GM12878 (cell line): ENCODE measurements at regions of chr6 and their contacts with region 1.

Region 1: GRCh38 chr6:129748212-129748900 is 38.4 kb upstream of the ARHGAP18 start:
- DNase-seq: peak; percentile 82
- ATAC-seq: peak; percentile 85
- H3K4me3 ChIP-seq: peak overlapping the region; percentile 56
- H3K27ac ChIP-seq: peak overlapping the region; percentile 96
- H3K4me1 ChIP-seq: peaks cover 42% of the 10 kb centered on the region
- H3K27me3 ChIP-seq: no peaks in the 10 kb centered on the region
- CTCF ChIP-seq: no peak
- EP300 ChIP-seq: 0 out of 4 replicates have a peak, but pooled peaks of 1 of the 2 experiments have one; percentile 29
- POLR2A ChIP-seq: peak; percentile 51
- RAD21 ChIP-seq: no peak

Region 2: DNA sequence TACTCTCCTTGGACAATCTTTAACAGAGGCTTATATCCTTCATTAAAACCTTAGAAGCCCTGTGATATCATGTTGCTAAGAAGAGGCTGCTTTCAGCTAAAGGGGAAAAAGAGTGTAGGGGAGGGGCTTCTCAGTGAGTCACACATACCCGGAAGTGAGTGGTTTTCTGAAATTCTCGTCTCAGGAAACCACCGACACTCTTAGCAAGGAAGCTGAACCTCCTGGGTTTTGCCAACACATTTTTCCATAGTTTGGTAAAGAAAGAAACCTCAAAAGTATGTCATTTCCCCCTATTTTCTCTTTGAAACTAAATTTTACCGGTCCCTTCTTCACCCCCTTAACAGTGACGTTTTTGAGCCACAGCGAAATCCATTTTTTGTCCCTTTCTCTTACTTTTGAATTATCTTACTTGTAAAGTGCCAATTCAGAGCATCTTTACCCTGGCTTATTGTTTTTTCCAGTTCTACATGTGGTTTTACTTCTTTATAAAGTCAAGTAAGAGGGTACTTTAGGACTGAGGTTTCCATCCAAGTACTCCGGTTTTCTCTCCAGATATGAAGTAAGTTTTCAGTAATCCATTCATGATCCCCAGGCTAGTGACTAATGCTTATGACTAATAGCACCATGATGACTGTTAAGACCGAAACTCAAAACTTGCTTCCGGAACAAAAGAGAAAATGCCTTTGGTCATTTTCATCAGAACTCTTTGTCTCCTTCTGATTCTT is 257.7 kb before region 1 on chr6:
- CTCF ChIA-PET with region 1: interaction called, 5 read pairs
- POLR2A ChIA-PET with region 1: interaction called, 4 read pairs
- RAD21 ChIA-PET with region 1: interaction called, 4 read pairs
- SMC1A ChIA-PET with region 1: interaction called, 4 read pairs
- in situ Hi-C with region 1: loop called (anchors 5 kb)
- intact Hi-C with region 1: no loop called
- DNase-seq: peak; percentile 68
- ATAC-seq: peak; percentile 89
- H3K4me3 ChIP-seq: 0 out of 2 replicates have a peak overlapping the region, but pooled peaks have one; percentile 1
- H3K27ac ChIP-seq: peak overlapping the region; percentile 88
- H3K4me1 ChIP-seq: peaks cover 23% of the 10 kb centered on the region
- H3K27me3 ChIP-seq: no peaks in the 10 kb centered on the region
- CTCF ChIP-seq: no peak
- EP300 ChIP-seq: peak in 1 of 2 experiments; percentile 72; a peak in 1 of 4 replicates
- POLR2A ChIP-seq: no peak
- RAD21 ChIP-seq: no peak

Region 3: DNA sequence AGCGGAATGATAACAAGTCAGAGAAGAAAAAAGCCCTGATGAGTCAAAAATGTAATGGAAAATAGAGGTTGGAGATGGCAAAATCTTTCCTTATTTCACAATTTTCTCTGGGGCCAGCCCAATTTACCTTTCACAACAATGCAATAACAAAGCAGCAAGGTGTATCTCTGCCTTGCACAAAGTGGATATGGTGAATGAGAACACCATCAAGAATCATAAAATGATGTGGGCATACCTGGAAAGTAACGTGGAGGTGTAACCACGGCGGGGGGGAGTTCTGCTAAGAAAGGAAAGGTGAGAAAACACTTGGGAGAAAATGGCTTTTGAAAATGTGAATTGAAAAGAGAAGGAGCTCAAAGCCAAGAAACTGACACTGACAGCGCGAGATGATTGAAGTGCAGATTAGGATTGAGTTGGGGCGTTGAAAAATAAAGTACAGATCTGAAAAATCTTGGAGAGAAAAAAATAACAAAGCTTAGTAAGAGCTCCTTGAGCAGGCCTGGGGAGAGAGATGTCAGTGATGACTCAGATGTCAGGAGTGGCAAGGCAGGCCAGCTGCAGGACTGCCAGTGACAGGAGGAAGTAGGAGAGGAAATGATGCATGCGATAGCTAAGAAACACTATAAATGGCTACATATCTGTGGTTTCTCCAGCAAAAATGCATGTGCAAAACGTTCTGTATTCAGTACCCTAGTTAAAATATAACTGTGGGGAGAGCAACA is 64.6 kb before region 1 on chr6:
- CTCF ChIA-PET with region 1: interaction called, 6 read pairs
- POLR2A ChIA-PET with region 1: interaction called, 9 read pairs
- RAD21 ChIA-PET with region 1: interaction called, 11 read pairs
- SMC1A ChIA-PET with region 1: interaction called, 8 read pairs
- in situ Hi-C with region 1: no loop called
- intact Hi-C with region 1: no loop called
- DNase-seq: peak; percentile 88
- ATAC-seq: peak; percentile 90
- H3K4me3 ChIP-seq: peak overlapping the region; percentile 30; the same call in 1 of the 2 replicates
- H3K27ac ChIP-seq: peak overlapping the region; percentile 93
- H3K4me1 ChIP-seq: peaks cover 48% of the 10 kb centered on the region
- H3K27me3 ChIP-seq: no peaks in the 10 kb centered on the region
- CTCF ChIP-seq: no peak
- EP300 ChIP-seq: peak; percentile 97 to 98
- POLR2A ChIP-seq: peak; percentile 38; the same call in 1 of the 2 replicates
- RAD21 ChIP-seq: peak; percentile 16; the same call in 1 of the 2 replicates

Region 4: DNA sequence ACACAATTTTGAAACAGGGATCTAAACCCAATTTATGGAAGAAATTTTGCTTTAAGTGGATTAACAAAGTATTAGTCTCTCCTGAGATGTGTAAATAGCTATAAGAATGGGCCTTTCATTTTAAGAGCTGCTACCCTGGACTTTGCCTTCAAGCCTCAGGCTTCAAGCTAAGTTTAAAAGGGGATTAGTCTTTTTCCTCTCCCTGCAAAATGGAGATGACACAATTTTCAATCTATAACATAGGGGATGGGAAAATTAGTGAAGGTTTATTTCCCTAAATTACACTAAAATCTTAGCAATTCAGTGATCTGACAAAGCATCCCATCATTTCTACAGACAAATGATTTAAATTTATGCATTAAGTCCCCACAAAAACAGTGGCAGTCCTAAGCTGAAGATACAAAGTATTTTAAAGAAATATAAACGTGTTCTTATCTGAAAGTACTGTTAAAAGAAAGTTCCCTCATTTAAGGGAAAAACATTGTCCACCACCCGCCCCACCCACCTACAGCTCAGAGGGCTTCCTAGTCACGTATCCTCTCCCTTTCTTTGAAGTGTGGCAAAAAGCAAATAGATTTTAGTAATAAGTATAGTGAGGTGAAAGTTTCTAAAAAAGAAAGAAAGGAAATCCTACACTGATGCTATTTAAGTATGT is 52.9 kb before region 1 on chr6:
- CTCF ChIA-PET with region 1: interaction called, 7 read pairs
- POLR2A ChIA-PET with region 1: interaction called, 9 read pairs
- RAD21 ChIA-PET with region 1: interaction called, 13 read pairs
- SMC1A ChIA-PET with region 1: interaction called, 12 read pairs
- in situ Hi-C with region 1: no loop called
- intact Hi-C with region 1: no loop called
- DNase-seq: no peak
- ATAC-seq: peak; percentile 64
- H3K4me3 ChIP-seq: peak overlapping the region; percentile 48
- H3K27ac ChIP-seq: peak overlapping the region; percentile 60
- H3K4me1 ChIP-seq: peaks cover 64% of the 10 kb centered on the region
- H3K27me3 ChIP-seq: no peaks in the 10 kb centered on the region
- CTCF ChIP-seq: no peak
- EP300 ChIP-seq: no peak; a peak in 1 of 4 replicates
- POLR2A ChIP-seq: no peak
- RAD21 ChIP-seq: no peak

Region 5: GRCh38 chr6:129701721-129702455 is 46.5 kb before region 1 on chr6:
- CTCF ChIA-PET with region 1: interaction called, 7 read pairs
- POLR2A ChIA-PET with region 1: interaction called, 9 read pairs
- RAD21 ChIA-PET with region 1: interaction called, 15 read pairs
- SMC1A ChIA-PET with region 1: interaction called, 12 read pairs
- in situ Hi-C with region 1: no loop called
- intact Hi-C with region 1: no loop called
- DNase-seq: no peak
- ATAC-seq: no peak
- H3K4me3 ChIP-seq: peak overlapping the region; percentile 30; the same call in 1 of the 2 replicates
- H3K27ac ChIP-seq: peak overlapping the region; percentile 14; the same call in 1 of the 2 replicates
- H3K4me1 ChIP-seq: peaks cover 37% of the 10 kb centered on the region
- H3K27me3 ChIP-seq: no peaks in the 10 kb centered on the region
- CTCF ChIP-seq: no peak
- EP300 ChIP-seq: no peak
- POLR2A ChIP-seq: no peak
- RAD21 ChIP-seq: no peak

Region 6: GRCh38 chr6:129766959-129767728 is 18.8 kb after region 1 on chr6:
- CTCF ChIA-PET with region 1: interaction called, 9 read pairs
- POLR2A ChIA-PET with region 1: interaction called, 4 read pairs
- RAD21 ChIA-PET with region 1: interaction called, 8 read pairs
- SMC1A ChIA-PET with region 1: interaction called, 11 read pairs
- in situ Hi-C with region 1: no loop called
- intact Hi-C with region 1: no loop called
- DNase-seq: no peak
- ATAC-seq: peak; percentile 90
- H3K4me3 ChIP-seq: peak overlapping the region; percentile 59
- H3K27ac ChIP-seq: no peak overlapping the region
- H3K4me1 ChIP-seq: no peaks in the 10 kb centered on the region
- H3K27me3 ChIP-seq: no peaks in the 10 kb centered on the region
- CTCF ChIP-seq: no peak
- EP300 ChIP-seq: no peak; a peak in 1 of 4 replicates
- POLR2A ChIP-seq: no peak
- RAD21 ChIP-seq: no peak

Region 7: DNA sequence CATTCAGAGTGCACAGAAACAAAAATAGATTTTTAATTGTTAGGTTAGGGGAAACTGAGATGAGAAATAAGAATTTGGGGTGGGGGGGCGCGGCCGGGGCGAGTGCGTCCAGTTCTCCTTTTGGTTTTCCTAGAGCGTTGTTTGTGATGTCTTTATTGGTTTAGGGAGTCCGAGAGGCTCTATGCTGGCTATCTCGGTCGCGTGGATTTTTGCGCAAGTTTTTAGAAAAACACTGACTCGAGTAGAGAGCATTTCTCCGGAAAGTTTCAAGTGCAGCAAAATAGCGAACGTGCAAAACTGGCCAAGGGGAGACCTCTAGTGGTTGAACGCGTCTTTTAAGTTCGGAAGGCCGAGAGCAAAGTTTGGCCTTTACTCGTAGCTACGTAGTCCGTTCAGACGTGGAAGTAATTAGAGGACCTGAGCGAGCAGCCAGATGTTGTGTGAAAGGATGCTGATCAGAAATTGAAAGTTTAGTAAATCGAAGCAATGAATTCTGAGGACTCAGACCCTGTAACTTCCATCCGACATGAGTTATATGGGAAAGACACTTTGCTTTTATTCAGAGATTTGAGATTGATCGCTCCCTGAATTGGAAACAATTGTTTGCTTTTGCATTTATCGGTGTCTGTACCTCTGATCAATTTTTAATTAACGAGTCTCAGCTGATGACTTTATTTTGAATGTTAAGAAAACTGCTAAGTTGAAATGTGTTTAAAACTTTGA is 272.7 kb after region 1 on chr6:
- CTCF ChIA-PET with region 1: interaction called, 4 read pairs
- POLR2A ChIA-PET with region 1: no interaction called
- RAD21 ChIA-PET with region 1: interaction called, 4 read pairs
- SMC1A ChIA-PET with region 1: interaction called, 11 read pairs
- in situ Hi-C with region 1: no loop called
- intact Hi-C with region 1: no loop called
- DNase-seq: peak; percentile 72
- ATAC-seq: peak; percentile 82
- H3K4me3 ChIP-seq: peak overlapping the region; percentile 82
- H3K27ac ChIP-seq: no peak overlapping the region
- H3K4me1 ChIP-seq: no peaks in the 10 kb centered on the region
- H3K27me3 ChIP-seq: no peaks in the 10 kb centered on the region
- CTCF ChIP-seq: peak; percentile 80 to 94 (median 81); a peak in 5 of 6 replicates
- EP300 ChIP-seq: no peak
- POLR2A ChIP-seq: no peak
- RAD21 ChIP-seq: peak; percentile 94